ENCODE measurements at regions of chr7 and their contacts with region 1.

Region 1: DNA sequence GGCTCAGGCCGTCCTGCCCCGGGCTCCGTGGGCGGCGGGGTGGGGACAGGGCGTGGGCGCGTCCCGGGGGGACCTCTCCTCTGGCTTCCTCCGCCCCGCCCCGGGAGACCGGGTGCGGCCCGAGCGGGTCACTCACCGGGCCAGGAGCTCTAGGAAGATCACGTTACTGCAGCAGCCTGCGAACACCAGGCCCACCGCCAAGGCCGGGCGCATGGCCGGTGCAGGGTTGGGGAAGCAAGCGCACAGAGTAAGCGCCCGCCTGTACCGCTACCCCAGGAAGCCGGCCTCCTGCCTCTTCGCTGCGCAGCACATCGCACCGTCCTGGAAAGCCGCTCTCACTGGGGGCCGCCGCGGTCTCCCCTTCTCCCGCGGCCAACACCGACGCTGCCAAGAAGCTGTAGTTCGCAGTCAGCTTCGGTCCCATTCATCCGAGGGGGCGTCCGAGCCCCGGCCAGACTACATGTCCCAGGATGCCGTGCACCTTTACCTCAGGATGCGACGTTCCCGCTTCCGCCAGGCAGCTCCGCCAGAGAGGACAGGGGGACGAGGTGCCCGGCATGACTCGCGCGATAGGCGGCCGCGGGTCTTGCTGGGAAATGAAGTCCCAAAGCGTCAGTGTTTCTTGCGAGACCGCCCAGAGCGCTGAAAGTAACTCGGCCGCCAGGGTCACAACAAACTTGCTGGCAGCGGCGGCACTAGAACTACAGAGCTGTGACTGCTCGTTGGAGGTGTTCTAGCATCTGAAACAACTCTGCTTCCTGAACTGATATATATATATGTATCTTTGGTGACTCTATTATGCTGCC is at the start of gene SLC35B4:
- DNase-seq: peak; percentile 79 to 95 (median 92)
- ATAC-seq: peak; percentile 99
- H3K4me3 ChIP-seq: peak within 1 kb of the TSS; percentile 79
- H3K4me3 Mint-ChIP-seq: peak within 1 kb of the TSS; percentile 88 to 97 (median 94)
- H3K27ac ChIP-seq: peak within 1 kb of the TSS; percentile 77
- H3K27ac Mint-ChIP-seq: peak within 1 kb of the TSS; percentile 81 to 93 (median 89)
- H3K4me1 ChIP-seq: peaks cover 0 to 15% of the 10 kb centered on the region in 2 donors
- H3K4me1 Mint-ChIP-seq: peaks cover 18 to 29% (median 26%) of the 10 kb centered on the region in 7 donors
- H3K27me3 ChIP-seq: no peaks in the 10 kb centered on the region
- H3K27me3 Mint-ChIP-seq: peaks cover 0 to 4% (median 0%) of the 10 kb centered on the region in 5 donors
- total RNA-seq, gene SLC35B4: 9.8 to 19.2 (median 12.2) TPM

Region 2: GRCh38 chr7:132773527-132773956 is 1543.2 kb before region 1 on chr7:
- CTCF ChIA-PET with region 1: no interaction called
- POLR2A ChIA-PET with region 1: no interaction called
- intact Hi-C with region 1: loop called in 1 of 2 experiments (anchors 5 kb)
- DNase-seq: no peak
- ATAC-seq: no peak
- H3K4me3 ChIP-seq: no peak overlapping the region
- H3K4me3 Mint-ChIP-seq: no peak overlapping the region
- H3K27ac ChIP-seq: no peak overlapping the region
- H3K27ac Mint-ChIP-seq: peak overlapping the region in 3 of 9 donors; percentile 0 to 53 (median 42)
- H3K4me1 ChIP-seq: peaks cover 0 to 24% of the 10 kb centered on the region in 2 donors
- H3K4me1 Mint-ChIP-seq: peaks cover 22 to 53% (median 39%) of the 10 kb centered on the region in 7 donors
- H3K27me3 ChIP-seq: no peaks in the 10 kb centered on the region
- H3K27me3 Mint-ChIP-seq: peaks cover 0 to 8% (median 0%) of the 10 kb centered on the region in 5 donors

Region 3: DNA sequence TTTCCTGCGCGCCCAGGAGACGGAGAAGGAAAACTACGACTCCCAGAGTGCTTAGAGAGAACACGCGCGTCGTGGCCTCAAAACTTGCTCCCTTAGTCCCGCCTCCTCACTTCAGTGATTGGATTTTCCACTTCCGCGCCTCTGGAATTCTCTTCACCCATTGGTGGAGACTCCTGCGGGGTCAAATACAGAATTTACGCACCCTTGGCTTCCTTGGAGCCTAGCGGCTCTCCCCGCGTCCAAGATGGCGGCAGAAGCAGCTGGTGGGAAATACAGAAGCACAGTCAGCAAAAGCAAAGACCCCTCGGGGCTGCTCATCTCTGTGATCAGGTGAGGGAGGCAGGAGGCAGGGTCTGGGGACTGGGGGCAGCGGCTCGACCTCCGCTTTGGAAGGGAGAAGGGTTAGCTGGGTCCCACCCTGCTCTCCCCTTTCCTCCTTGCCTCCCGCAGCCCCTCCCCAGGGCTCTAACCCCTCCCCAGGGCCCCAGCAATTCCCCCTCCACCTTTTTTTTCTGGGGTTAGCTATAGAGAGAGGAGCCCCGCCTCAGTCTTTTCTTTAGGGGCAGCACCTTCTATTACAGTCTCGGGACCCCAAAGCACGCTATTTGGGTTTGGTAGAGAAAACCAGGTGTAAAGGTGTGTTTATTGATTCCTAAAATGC is 1063.8 kb before region 1 on chr7 and contains the start of gene EXOC4:
- CTCF ChIA-PET with region 1: no interaction called
- POLR2A ChIA-PET with region 1: interaction called, 3 read pairs
- intact Hi-C with region 1: loop called in 1 of 2 experiments (anchors 1 kb)
- DNase-seq: peak; percentile 66 to 97 (median 95)
- ATAC-seq: peak; percentile 100
- H3K4me3 ChIP-seq: peak within 1 kb of the TSS; percentile 87
- H3K4me3 Mint-ChIP-seq: peak within 1 kb of the TSS; percentile 85 to 99 (median 96)
- H3K27ac ChIP-seq: peak within 1 kb of the TSS; percentile 93
- H3K27ac Mint-ChIP-seq: peak within 1 kb of the TSS; percentile 94 to 98 (median 96)
- H3K4me1 ChIP-seq: peaks cover 4 to 7% of the 10 kb centered on the region in 2 donors
- H3K4me1 Mint-ChIP-seq: peaks cover 22 to 45% (median 40%) of the 10 kb centered on the region in 7 donors
- H3K27me3 ChIP-seq: no peaks in the 10 kb centered on the region
- H3K27me3 Mint-ChIP-seq: peaks cover 0 to 9% (median 0%) of the 10 kb centered on the region in 5 donors
- total RNA-seq, gene EXOC4: 65.4 to 106 (median 82.9) TPM

Region 4: DNA sequence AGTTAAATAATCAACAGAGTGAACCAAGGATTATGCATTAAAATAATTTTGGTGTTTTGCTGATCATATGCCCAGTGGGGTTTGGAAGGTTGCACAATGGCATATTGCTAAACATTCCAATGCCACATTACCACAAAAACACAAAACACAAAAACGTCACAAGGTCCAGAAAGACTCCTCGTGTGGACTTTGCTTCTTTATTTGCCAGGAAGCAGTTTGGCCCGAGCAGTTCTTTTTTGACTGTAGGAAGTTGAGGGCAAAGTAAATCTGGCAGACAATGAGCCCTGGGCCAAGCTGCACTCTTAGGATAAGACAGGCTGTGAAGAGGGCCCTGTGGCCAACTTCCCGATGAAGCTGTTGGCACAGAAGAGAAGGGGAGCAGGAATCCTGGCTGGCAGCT is 39.2 kb after region 1 on chr7:
- CTCF ChIA-PET with region 1: interaction called, 3 read pairs
- POLR2A ChIA-PET with region 1: interaction called, 3 read pairs
- intact Hi-C with region 1: loop called in 1 of 2 experiments (anchors 1 kb)
- DNase-seq: no peak
- ATAC-seq: no peak
- H3K4me3 ChIP-seq: no peak overlapping the region
- H3K4me3 Mint-ChIP-seq: no peak overlapping the region
- H3K27ac ChIP-seq: no peak overlapping the region
- H3K27ac Mint-ChIP-seq: no peak overlapping the region
- H3K4me1 ChIP-seq: no peaks in the 10 kb centered on the region
- H3K4me1 Mint-ChIP-seq: peaks cover 0 to 4% (median 0%) of the 10 kb centered on the region in 7 donors
- H3K27me3 ChIP-seq: no peaks in the 10 kb centered on the region
- H3K27me3 Mint-ChIP-seq: peaks cover 0 to 6% (median 5%) of the 10 kb centered on the region in 5 donors

Region 5: DNA sequence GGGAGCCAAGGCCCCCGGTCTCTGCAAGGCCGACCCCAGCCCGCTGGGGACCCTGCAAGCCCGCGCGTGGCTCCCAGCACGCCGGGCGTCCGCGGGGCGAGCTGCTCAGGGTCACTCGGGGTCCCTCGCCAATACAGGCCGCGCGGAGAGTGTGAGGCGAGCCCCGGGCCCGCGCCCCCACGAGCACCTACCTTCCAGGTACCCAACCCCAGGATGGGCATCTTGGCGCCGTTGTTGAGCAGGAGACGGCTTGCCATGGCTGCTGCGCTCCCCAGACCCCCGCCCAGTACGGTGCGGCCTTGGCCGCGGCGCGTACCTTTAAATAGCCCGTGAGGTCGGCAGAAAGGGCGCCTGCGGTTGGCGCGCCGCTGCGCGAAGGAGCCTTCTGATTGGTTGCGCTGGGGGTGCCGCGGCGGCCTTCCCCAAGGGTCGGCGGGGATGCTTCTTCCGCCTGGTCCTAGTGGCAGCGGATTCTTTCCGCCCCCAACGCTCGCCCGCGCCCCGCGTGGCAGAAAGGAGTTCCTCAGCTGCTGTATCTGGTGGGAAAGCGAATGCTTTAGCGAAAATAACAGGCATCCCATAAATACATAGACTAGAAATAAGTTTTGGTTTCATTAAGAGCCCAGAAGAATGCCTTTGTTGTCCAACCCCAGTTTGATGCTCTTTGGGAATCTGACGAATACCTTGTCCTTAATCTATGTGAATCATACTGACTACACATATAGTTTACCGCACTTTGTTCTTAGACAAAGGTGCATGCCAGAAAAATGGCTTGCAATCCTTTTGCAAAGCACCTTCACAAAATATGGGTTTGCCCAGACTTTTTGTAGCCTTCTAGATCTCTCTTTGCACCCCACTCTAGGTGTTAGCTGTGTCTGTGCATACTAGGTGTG is 142.3 kb after region 1 on chr7 and contains the start of gene AKR1B1:
- CTCF ChIA-PET with region 1: no interaction called
- POLR2A ChIA-PET with region 1: no interaction called
- intact Hi-C with region 1: loop called (anchors 1 kb)
- DNase-seq: peak; percentile 76 to 88 (median 84)
- ATAC-seq: peak; percentile 94
- H3K4me3 ChIP-seq: peak within 1 kb of the TSS; percentile 78
- H3K4me3 Mint-ChIP-seq: peak within 1 kb of the TSS; percentile 71 to 94 (median 89)
- H3K27ac ChIP-seq: peak within 1 kb of the TSS; percentile 72
- H3K27ac Mint-ChIP-seq: peak within 1 kb of the TSS; percentile 80 to 92 (median 84)
- H3K4me1 ChIP-seq: peaks cover 20 to 30% of the 10 kb centered on the region in 2 donors
- H3K4me1 Mint-ChIP-seq: peaks cover 30 to 55% (median 48%) of the 10 kb centered on the region in 7 donors
- H3K27me3 ChIP-seq: no peaks in the 10 kb centered on the region
- H3K27me3 Mint-ChIP-seq: no peaks in the 10 kb centered on the region
- total RNA-seq, gene AKR1B1: 62.2 to 108 (median 100) TPM

Region 6: GRCh38 chr7:135147899-135148721 is 831.4 kb after region 1 on chr7 and contains the start of gene TMEM140:
- CTCF ChIA-PET with region 1: no interaction called
- POLR2A ChIA-PET with region 1: interaction called, 3 read pairs
- intact Hi-C with region 1: loop called in 1 of 2 experiments (anchors 2 kb)
- DNase-seq: peak in 8 of 9 donors; percentile 56 to 88 (median 80)
- ATAC-seq: peak; percentile 84
- H3K4me3 ChIP-seq: peak within 1 kb of the TSS; percentile 71
- H3K4me3 Mint-ChIP-seq: peak within 1 kb of the TSS; percentile 83 to 95 (median 92)
- H3K27ac ChIP-seq: peak within 1 kb of the TSS; percentile 90
- H3K27ac Mint-ChIP-seq: peak within 1 kb of the TSS; percentile 93 to 99 (median 97)
- H3K4me1 ChIP-seq: peaks cover 31 to 38% of the 10 kb centered on the region in 2 donors
- H3K4me1 Mint-ChIP-seq: peaks cover 41 to 74% (median 70%) of the 10 kb centered on the region in 7 donors
- H3K27me3 ChIP-seq: no peaks in the 10 kb centered on the region
- H3K27me3 Mint-ChIP-seq: no peaks in the 10 kb centered on the region
- total RNA-seq, gene TMEM140: 17.8 to 44.7 (median 20.4) TPM

Region 7: DNA sequence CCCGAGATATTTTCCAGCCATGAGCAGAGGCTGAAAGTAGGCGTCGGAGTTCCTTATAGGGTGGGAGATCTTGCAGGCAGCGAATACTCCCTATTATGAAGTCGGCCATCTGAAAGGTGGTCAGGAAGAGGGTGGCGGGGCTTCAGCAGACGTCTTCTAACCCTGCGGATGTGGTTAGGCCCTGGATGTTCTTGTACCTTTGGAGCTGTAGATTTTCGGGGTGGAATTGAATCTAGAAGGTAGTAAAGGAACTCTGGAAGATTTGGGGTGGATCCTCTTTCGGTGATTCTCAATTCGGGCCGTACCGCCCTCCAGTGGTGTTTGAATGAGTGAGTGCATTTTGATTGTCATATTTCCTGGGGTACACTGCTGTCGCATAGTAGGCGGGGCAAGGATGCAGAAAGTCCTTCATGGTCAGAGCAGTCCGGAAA is 1241.6 kb after region 1 on chr7:
- CTCF ChIA-PET with region 1: no interaction called
- POLR2A ChIA-PET with region 1: no interaction called
- intact Hi-C with region 1: loop called in 1 of 2 experiments (anchors 1 kb)
- DNase-seq: peak; percentile 36 to 71 (median 66)
- ATAC-seq: peak; percentile 78
- H3K4me3 ChIP-seq: peak overlapping the region; percentile 89
- H3K4me3 Mint-ChIP-seq: no peak overlapping the region
- H3K27ac ChIP-seq: peak overlapping the region; percentile 92
- H3K27ac Mint-ChIP-seq: no peak overlapping the region
- H3K4me1 ChIP-seq: peaks cover 6% of the 10 kb centered on the region in 2 donors
- H3K4me1 Mint-ChIP-seq: peaks cover 10 to 35% (median 25%) of the 10 kb centered on the region in 7 donors
- H3K27me3 ChIP-seq: no peaks in the 10 kb centered on the region
- H3K27me3 Mint-ChIP-seq: peaks cover 0 to 6% (median 0%) of the 10 kb centered on the region in 5 donors